ENCODE measurements at regions of chr11 and their contacts with region 1.

Region 1: GRCh38 chr11:57974848-57975601 is 48.7 kb upstream of the OR9Q1 start:
- ATAC-seq: no peak
- H3K4me3 ChIP-seq: no peak overlapping the region
- H3K27ac ChIP-seq: no peak overlapping the region
- H3K4me1 ChIP-seq: no peaks in the 10 kb centered on the region

Region 2: GRCh38 chr11:57873196-57873911 is 101.7 kb before region 1 on chr11:
- in situ Hi-C with region 1: loop called in 1 of 9 experiments (anchors 25 kb)
- ATAC-seq: no peak
- H3K4me3 ChIP-seq: no peak overlapping the region
- H3K27ac ChIP-seq: no peak overlapping the region
- H3K4me1 ChIP-seq: no peaks in the 10 kb centered on the region